ENCODE measurements at regions of chr10 and their contacts with region 1.

Region 1: DNA sequence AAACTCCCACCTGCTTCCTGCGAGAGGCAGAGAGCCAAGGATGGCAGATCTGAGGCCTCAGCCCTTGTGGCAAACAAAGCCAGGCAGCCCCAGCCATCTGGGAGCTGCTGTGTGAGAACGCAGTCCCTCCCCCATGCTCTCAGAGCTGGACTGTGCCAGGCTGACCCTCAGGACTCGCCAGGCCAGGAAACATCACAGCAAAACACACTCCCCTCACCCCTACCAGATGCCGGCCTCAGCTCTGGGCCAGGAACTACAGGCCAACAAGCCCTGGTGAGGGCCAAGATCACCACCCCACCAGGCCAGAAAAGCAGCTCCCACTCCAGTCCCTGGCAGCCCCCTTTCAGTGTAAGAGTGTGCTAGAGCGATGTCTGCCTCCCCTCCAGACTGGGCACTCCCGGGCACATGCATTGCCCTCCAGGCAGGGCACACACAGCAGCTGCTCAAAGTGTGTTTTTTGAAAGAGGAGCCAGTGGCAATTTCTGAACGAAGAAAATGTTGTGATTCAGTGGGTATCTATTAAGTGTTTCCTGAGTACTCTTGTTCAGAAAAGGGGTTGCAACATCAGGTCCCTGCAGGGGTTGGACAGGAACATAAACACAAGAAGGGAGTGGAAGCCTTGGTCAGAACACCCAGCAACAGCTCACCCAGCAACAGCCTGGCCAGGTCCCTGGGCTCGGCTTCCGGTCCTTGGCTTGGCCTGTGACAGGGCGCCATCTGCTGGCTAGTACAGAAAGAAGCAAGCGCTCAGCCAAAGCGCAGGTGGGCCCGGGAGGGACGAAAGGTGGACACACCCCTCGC is 18.3 kb downstream of the LRRC20 start:
- DNase-seq: peak; percentile 93
- ATAC-seq: peak; percentile 99
- H3K4me3 Mint-ChIP-seq: peak overlapping the region; percentile 12
- H3K27ac Mint-ChIP-seq: peak overlapping the region; percentile 74
- H3K4me1 Mint-ChIP-seq: peaks cover 31% of the 10 kb centered on the region
- H3K27me3 Mint-ChIP-seq: no peaks in the 10 kb centered on the region

Region 2: DNA sequence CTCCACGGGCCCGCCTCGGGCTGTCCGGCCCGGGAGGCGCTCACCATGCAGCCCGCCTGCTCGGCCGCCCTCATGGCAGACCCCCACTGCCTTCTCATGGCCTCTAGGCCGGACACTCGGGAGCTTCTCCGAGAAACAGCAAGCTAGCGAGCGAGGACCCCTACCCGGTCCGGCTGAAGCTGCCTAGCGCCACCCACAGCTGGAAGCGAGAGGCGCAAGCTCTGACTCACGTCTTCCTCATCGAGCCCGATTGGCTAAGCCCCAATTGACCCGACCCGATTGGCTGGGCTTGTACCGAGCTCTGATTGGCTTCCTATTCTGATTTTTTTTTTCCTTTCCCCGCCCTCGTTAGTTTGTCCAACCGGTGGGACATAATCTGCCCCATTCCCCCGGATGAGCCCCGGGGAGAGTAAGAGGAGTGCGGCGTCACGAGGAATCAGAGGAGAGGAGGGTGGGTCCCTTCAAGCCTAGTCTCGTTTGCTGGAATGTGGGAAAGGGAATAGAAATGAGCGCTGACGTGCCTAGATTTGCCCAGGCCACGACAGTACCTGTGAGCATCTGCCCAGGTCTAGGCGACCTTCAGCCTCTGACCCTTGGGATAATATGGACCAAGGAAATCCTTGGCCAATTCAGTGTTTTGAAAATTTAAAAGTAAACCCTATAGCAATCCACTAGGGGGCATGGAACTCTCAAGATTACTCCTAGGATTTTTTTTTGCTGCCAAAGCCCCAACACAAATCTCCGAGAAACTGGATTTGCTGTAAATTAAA is 217.5 kb before region 1 on chr10 and contains the start of gene TYSND1:
- CTCF ChIA-PET with region 1: interaction called, 30 read pairs
- DNase-seq: peak; percentile 97
- ATAC-seq: peak; percentile 86
- H3K4me3 Mint-ChIP-seq: peak within 1 kb of the TSS; percentile 87
- H3K27ac Mint-ChIP-seq: peak within 1 kb of the TSS; percentile 91
- H3K4me1 Mint-ChIP-seq: peaks cover 32% of the 10 kb centered on the region
- H3K27me3 Mint-ChIP-seq: no peaks in the 10 kb centered on the region
- total RNA-seq, gene TYSND1: 12.4 to 13.8 TPM

Region 3: DNA sequence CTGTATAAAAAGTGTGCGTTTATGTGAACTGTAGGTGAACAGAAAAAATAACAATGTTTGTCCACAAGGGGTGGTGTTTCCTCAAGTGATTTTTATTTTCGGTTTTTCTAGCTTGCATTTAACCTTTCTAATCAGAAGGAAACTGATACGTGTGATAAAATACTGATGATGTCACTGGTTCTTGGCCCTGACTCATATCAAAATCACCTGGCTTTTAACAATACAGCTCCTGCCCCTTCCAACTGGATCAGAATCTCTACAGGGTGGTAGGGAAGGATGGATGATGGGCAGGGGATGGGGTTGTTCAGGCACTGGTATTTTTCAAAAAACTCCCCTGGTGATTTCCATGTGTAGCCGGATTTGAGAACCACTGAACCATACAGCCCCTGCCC is 91.2 kb before region 1 on chr10:
- CTCF ChIA-PET with region 1: interaction called, 167 read pairs
- DNase-seq: no peak
- ATAC-seq: peak; percentile 89
- H3K4me3 Mint-ChIP-seq: peak overlapping the region; percentile 23
- H3K27ac Mint-ChIP-seq: peak overlapping the region; percentile 45
- H3K4me1 Mint-ChIP-seq: peaks cover 18% of the 10 kb centered on the region
- H3K27me3 Mint-ChIP-seq: no peaks in the 10 kb centered on the region

Region 4: GRCh38 chr10:70324339-70324861 is 39.8 kb before region 1 on chr10:
- CTCF ChIA-PET with region 1: interaction called, 18 read pairs
- DNase-seq: peak; percentile 50
- ATAC-seq: peak; percentile 38
- H3K4me3 Mint-ChIP-seq: no peak overlapping the region
- H3K27ac Mint-ChIP-seq: peak overlapping the region; percentile 89
- H3K4me1 Mint-ChIP-seq: peaks cover 43% of the 10 kb centered on the region
- H3K27me3 Mint-ChIP-seq: no peaks in the 10 kb centered on the region

Region 5: GRCh38 chr10:70374775-70375614 is 10.8 kb after region 1 on chr10:
- CTCF ChIA-PET with region 1: interaction called, 51 read pairs
- DNase-seq: no peak
- ATAC-seq: no peak
- H3K4me3 Mint-ChIP-seq: no peak overlapping the region
- H3K27ac Mint-ChIP-seq: no peak overlapping the region
- H3K4me1 Mint-ChIP-seq: peaks cover 3% of the 10 kb centered on the region
- H3K27me3 Mint-ChIP-seq: no peaks in the 10 kb centered on the region

Region 6: GRCh38 chr10:70404036-70404786 is 40.0 kb after region 1 on chr10 and contains the start of gene EIF4EBP2:
- CTCF ChIA-PET with region 1: interaction called, 15 read pairs
- DNase-seq: peak; percentile 98
- ATAC-seq: peak; percentile 93
- H3K4me3 Mint-ChIP-seq: peak within 1 kb of the TSS; percentile 95
- H3K27ac Mint-ChIP-seq: peak within 1 kb of the TSS; percentile 90
- H3K4me1 Mint-ChIP-seq: peaks cover 34% of the 10 kb centered on the region
- H3K27me3 Mint-ChIP-seq: no peaks in the 10 kb centered on the region
- total RNA-seq, gene EIF4EBP2: 37.8 to 51.7 TPM

Region 7: GRCh38 chr10:70493660-70494234 is 129.6 kb after region 1 on chr10:
- CTCF ChIA-PET with region 1: no interaction called
- DNase-seq: peak; percentile 50
- ATAC-seq: peak; percentile 32
- H3K4me3 Mint-ChIP-seq: no peak overlapping the region
- H3K27ac Mint-ChIP-seq: peak overlapping the region; percentile 39
- H3K4me1 Mint-ChIP-seq: peaks cover 25% of the 10 kb centered on the region
- H3K27me3 Mint-ChIP-seq: peaks cover 27% of the 10 kb centered on the region

Measured in activated CD8-positive, alpha-beta memory T cell treated with anti-CD3 and anti-CD28 coated beads, Interleukin-2, amount 10 ng/mL, durations not matched to agents 7 days and 5 days (primary cell).